ENCODE measurements at regions of chr17 and their contacts with region 1.

Region 1: GRCh38 chr17:81387100-81388090 is 7.9 kb upstream of the BAHCC1 start:
- DNase-seq: peak; percentile 66 to 84
- ATAC-seq: peak; percentile 10 to 79 (median 52)
- H3K4me3 ChIP-seq: peak overlapping the region; percentile 60 to 87 (median 79)
- H3K27ac ChIP-seq: peak overlapping the region; percentile 93 to 99 (median 98)
- H3K4me1 ChIP-seq: peaks cover 28 to 61% (median 51%) of the 10 kb centered on the region in 9 donors
- H3K27me3 ChIP-seq: peaks cover 0 to 38% (median 0%) of the 10 kb centered on the region in 7 donors
- CTCF ChIP-seq: no peak

Region 2: GRCh38 chr17:81184555-81184954 is 202.8 kb before region 1 on chr17:
- intact Hi-C with region 1: no loop called
- DNase-seq: no peak
- ATAC-seq: no peak
- H3K4me3 ChIP-seq: no peak overlapping the region
- H3K27ac ChIP-seq: no peak overlapping the region
- H3K4me1 ChIP-seq: peaks cover 0 to 8% (median 0%) of the 10 kb centered on the region in 9 donors
- H3K27me3 ChIP-seq: peaks cover 0 to 8% (median 0%) of the 10 kb centered on the region in 7 donors
- CTCF ChIP-seq: no peak

Region 3: GRCh38 chr17:81346090-81346907 is 41.1 kb before region 1 on chr17:
- intact Hi-C with region 1: loop called in 1 of 10 experiments (anchors 1 kb)
- DNase-seq: peak; percentile 99
- ATAC-seq: peak; percentile 84 to 93 (median 92)
- H3K4me3 ChIP-seq: peak overlapping the region; percentile 42 to 92 (median 75)
- H3K27ac ChIP-seq: peak overlapping the region; percentile 79 to 98 (median 90)
- H3K4me1 ChIP-seq: peaks cover 6 to 65% (median 21%) of the 10 kb centered on the region in 9 donors
- H3K27me3 ChIP-seq: peaks cover 0 to 40% (median 0%) of the 10 kb centered on the region in 7 donors
- CTCF ChIP-seq: no peak

Region 4: DNA sequence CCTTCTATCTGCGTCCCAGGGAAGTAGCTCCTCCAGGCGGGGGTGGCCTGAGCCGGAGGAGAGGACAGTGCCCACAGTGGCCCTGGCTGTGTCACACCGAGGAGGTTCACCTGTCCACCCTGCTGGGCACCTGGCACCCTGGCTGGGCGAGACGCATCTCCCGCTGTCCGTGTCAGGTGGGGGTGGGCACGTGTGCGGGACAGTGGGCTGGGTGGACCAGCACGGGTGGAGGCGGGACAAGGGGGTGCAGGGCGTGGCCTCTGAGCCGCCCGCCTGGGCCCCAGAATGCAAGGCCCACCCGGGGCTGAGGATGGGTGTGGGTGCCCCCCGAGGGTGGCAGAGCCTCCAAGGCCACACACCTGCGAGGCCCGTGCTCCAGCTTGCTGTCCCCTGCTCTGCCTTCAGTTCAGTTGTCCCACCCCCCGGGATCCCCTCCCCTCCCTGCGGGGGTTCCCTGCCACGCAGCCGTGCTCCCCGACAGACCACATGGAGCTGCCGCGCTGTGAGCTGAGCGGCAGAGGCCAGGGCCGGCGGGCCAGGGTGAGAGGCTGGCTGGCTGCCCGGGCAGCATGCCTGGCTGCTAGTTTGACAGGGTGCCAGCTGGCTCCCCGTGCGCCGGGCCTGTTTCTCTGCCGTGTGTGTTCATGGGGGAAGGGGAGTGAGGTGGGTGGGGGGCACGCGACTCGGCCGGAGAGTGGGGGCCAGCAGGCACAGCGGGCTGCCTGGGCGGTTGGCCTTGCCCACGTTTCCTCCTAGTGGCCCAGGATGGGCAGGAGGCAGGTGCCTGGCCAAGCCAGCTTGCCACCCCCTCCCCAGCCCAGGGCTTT is 41.8 kb after region 1 on chr17:
- intact Hi-C with region 1: no loop called
- DNase-seq: peak; percentile 78 to 87
- ATAC-seq: peak; percentile 71 to 82 (median 80)
- H3K4me3 ChIP-seq: peak overlapping the region in 6 of 10 donors; percentile 1 to 26 (median 20)
- H3K27ac ChIP-seq: peak overlapping the region in 5 of 10 donors; percentile 16 to 44 (median 36)
- H3K4me1 ChIP-seq: peaks cover 38 to 63% (median 51%) of the 10 kb centered on the region in 9 donors
- H3K27me3 ChIP-seq: peaks cover 0 to 38% (median 0%) of the 10 kb centered on the region in 7 donors
- CTCF ChIP-seq: no peak

Measured in heart right ventricle (tissue), 16 donors.